Right lobe of liver (tissue), 6 donors: ENCODE measurements at regions of chr11 and their contacts with region 1.

Region 1: DNA sequence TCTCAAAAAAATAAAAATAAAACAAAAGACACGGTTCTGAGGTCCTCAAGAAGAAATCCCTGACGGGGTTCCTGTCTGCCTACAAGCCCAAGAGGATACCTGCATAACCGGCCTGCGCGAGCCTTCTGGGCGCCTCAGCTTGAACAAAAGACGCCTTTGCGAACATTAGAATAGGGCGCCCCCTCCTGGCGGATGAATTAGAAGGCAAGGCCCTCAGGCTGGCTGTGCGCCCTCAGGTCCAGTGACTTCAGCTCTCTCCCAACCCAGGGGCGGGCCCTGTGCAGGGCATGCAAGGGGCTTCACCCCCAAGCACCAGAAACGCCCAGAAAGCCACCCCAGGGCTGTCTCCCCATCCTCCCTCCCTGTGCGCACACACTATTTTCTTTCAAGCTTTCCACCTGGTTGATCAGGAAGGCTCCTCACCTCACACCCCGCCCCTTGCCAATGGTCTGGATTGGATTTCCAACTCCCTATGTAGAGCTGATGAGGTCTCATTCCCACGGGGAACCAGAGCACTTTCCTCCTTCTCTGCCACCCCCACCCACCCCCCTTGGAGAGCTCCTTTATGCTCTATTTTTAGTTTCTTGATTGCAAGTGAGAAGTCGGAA is 273.3 kb downstream of the BUD13 start:
- DNase-seq: peak; percentile 54 to 64 (median 61)
- ATAC-seq: peak; percentile 35 to 72 (median 50)
- H3K4me3 ChIP-seq: no peak overlapping the region
- H3K27ac ChIP-seq: no peak overlapping the region
- H3K4me1 ChIP-seq: no peaks in the 10 kb centered on the region
- H3K27me3 ChIP-seq: no peaks in the 10 kb centered on the region
- CTCF ChIP-seq: peak; percentile 34 to 57 (median 44)
- POLR2A ChIP-seq: no peak

Region 2: GRCh38 chr11:116691771-116692177 is 192.3 kb after region 1 on chr11:
- intact Hi-C with region 1: loop called in 1 of 2 experiments (anchors 10 kb)
- DNase-seq: peak in 2 of 3 donors; percentile 47 to 65
- ATAC-seq: peak; percentile 78 to 90 (median 83)
- H3K4me3 ChIP-seq: no peak overlapping the region
- H3K27ac ChIP-seq: no peak overlapping the region
- H3K4me1 ChIP-seq: no peaks in the 10 kb centered on the region
- H3K27me3 ChIP-seq: no peaks in the 10 kb centered on the region
- CTCF ChIP-seq: peak; percentile 72 to 86 (median 80)
- POLR2A ChIP-seq: no peak

Region 3: GRCh38 chr11:116762132-116762531 is 262.6 kb after region 1 on chr11:
- intact Hi-C with region 1: no loop called
- DNase-seq: no peak
- ATAC-seq: no peak
- H3K4me3 ChIP-seq: no peak overlapping the region
- H3K27ac ChIP-seq: no peak overlapping the region
- H3K4me1 ChIP-seq: no peaks in the 10 kb centered on the region
- H3K27me3 ChIP-seq: no peaks in the 10 kb centered on the region
- CTCF ChIP-seq: no peak
- POLR2A ChIP-seq: no peak